ENCODE measurements at regions of chr3 and their contacts with region 1.

Region 1: GRCh38 chr3:46923559-46924350 is 46.2 kb downstream of the PTH1R start:
- DNase-seq: peak in 2 of 5 donors; percentile 33 to 58
- ATAC-seq: peak; percentile 34 to 38 (median 36)
- H3K4me3 ChIP-seq: no peak overlapping the region
- H3K27ac ChIP-seq: peak overlapping the region in 1 of 12 donors; percentile 3
- H3K4me1 ChIP-seq: peaks cover 9 to 57% (median 49%) of the 10 kb centered on the region in 12 donors
- H3K27me3 ChIP-seq: no peaks in the 10 kb centered on the region
- CTCF ChIP-seq: peak; percentile 52 to 77 (median 64)
- POLR2A ChIP-seq: no peak

Region 2: GRCh38 chr3:46797458-46797857 is 126.3 kb before region 1 on chr3:
- intact Hi-C with region 1: no loop called
- DNase-seq: no peak
- ATAC-seq: no peak
- H3K4me3 ChIP-seq: no peak overlapping the region
- H3K27ac ChIP-seq: no peak overlapping the region
- H3K4me1 ChIP-seq: no peaks in the 10 kb centered on the region
- H3K27me3 ChIP-seq: no peaks in the 10 kb centered on the region
- CTCF ChIP-seq: no peak
- POLR2A ChIP-seq: no peak

Region 3: DNA sequence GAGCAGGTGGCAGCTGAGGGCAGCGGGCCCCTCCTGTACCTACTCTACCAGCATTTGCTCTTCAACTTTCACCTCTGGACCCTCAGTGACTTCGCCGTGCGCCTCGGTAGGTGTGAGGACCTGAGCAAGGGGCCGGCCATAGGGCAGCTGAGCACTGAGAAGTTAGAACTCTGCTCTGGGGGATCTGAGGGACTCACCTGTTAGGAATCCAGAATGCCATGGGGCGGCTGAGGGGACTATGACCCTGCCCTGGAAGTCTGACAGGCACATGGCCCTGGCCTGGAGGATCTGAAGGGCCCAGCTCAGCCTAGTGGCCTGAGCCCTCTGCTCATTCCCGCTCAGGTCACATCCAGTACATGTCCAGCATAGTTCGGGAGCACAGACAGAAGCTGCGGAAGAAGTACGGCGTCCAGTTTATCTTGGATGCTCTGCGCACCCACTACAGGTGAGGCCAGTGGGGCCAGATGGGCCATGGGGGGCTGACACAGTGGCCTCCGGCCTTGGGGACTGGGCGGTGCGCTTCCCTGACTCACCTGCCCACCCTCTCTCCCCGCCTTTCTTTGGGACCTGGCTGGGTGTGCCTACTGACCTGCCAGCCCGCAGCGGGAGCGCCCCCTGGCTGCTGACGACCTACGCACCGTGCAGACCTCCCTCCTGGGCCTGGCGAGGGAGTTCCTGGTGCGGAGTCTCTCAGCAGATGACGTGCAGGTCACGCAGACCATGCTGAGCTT is 74.5 kb after region 1 on chr3:
- intact Hi-C with region 1: loop called (anchors 1 to 5 kb)
- DNase-seq: peak; percentile 67 to 89 (median 74)
- ATAC-seq: peak; percentile 66 to 84 (median 74)
- H3K4me3 ChIP-seq: no peak overlapping the region
- H3K27ac ChIP-seq: no peak overlapping the region
- H3K4me1 ChIP-seq: peaks cover 0 to 13% (median 0%) of the 10 kb centered on the region in 12 donors
- H3K27me3 ChIP-seq: no peaks in the 10 kb centered on the region
- CTCF ChIP-seq: peak; percentile 68 to 87 (median 80)
- POLR2A ChIP-seq: no peak

Region 4: DNA sequence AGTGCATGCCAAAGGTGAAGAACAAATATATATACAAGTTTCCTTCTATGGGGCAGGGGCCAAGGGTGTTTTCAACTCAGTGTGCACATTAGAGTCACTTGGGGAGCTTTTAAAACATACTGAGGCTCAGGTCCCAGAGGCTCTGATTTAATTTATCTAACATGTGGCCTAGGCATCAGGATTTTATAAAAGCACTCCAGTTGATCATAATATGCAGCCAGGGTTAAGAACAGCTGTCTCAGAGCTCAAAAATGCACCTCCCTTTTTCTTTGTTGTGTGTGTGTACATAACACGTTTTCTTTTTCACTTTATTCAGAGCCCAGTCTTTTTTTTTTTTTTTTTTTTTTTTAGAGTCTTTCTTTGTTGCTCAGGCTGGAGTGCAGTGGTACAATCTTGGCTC is 298.0 kb after region 1 on chr3:
- intact Hi-C with region 1: loop called in 1 of 10 experiments (anchors 5 kb)
- DNase-seq: no peak
- ATAC-seq: no peak
- H3K4me3 ChIP-seq: no peak overlapping the region
- H3K27ac ChIP-seq: no peak overlapping the region
- H3K4me1 ChIP-seq: peaks cover 0 to 23% (median 0%) of the 10 kb centered on the region in 12 donors
- H3K27me3 ChIP-seq: no peaks in the 10 kb centered on the region
- CTCF ChIP-seq: no peak
- POLR2A ChIP-seq: no peak